ENCODE measurements at regions of chr11 and their contacts with region 1.

Region 1: DNA sequence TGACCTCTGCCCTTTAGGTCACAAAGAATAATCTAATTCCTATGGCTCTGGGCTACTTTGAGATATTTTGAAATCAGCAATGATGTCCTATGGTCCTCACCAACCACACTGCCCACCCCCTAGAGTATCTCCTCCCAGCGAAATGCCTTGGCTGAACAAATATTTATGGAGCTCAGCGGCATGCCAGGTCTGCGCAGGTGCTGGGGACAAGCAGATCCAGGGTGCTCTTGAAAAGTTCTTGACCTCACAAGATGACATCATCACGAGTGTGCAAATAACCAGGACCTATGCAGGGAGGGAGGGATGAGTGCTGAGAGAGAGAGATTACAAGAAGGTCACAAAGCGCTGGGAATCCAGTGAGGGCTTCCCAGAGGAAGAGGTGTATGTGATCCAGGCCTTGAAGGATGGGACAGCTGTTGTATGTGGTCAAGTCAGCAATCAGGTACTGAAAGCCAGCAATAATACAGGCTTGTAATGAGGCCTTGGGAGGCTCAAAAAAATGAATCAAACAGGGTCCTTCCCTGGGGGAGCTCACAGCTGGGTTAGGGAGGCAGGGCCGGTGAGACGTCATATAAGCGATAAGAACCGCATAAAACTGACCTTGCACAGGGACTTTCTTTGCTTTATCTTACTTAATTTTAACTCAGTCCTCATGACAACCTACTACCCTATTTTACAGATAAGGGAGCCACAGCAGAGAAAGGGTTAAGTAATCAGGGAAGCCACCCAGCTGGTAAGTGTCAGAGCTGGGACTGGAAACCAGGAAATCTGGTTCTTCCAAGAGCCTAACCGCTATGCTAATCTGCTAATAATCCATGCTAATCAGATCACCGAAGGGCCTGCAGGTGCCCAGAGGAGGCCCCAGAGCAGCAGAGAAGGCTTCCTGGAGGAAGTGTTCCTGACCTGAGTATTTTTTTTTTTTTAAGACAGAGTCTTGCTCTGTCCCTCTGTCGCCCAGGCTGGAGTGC is 8.3 kb downstream of the ARRB1 start:
- DNase-seq: no peak
- H3K4me3 ChIP-seq: no peak overlapping the region
- H3K27me3 ChIP-seq: no peaks in the 10 kb centered on the region
- CTCF ChIP-seq: no peak

Region 2: GRCh38 chr11:75248690-75249268 is 94.4 kb before region 1 on chr11:
- CTCF ChIA-PET with region 1: no interaction called
- POLR2A ChIA-PET with region 1: no interaction called
- DNase-seq: peak; percentile 37
- H3K4me3 ChIP-seq: no peak overlapping the region
- H3K27me3 ChIP-seq: peaks cover 17% of the 10 kb centered on the region
- CTCF ChIP-seq: peak; percentile 100

Region 3: DNA sequence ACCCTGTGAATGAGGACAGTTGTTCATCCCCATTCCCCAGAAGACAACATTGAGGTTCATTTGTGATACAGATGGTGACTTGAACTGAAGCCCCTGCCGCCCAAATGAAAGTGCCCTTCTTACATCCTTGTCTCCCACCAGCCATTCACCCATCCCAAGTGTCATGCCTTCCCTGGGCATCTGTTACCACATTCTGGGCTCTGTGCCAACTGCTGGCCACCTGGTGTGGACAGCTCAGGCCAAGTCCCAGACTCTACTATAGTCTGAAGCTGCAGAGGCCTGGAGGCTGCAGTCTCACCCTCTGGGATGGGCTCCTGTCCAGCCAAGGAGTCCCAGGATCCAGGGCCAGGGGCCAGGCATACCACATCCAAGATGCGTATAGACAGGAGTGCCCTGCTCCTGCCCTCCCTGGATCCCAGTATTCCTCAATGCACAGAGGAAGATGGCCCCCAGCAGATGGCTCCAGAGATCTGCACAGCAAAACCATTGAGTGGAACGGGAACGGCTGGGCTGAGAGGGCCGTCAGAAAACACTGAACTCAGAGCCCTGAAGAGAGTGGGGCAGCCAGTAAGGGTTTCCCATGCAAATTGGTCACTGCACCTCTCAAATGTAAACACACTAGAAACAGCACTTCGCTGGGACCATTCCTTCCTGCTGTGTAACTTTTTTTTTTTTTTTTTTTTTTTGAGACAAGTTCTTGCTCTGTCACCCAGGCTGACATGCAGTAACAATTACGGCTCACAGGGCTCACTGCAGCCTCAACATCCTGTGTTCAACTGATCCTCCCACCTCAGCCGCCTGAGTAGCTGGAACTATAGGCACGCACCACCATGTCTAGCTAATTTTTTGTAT is 14.5 kb before region 1 on chr11:
- CTCF ChIA-PET with region 1: interaction called, 20 read pairs
- POLR2A ChIA-PET with region 1: interaction called, 3 read pairs
- DNase-seq: no peak
- H3K4me3 ChIP-seq: no peak overlapping the region
- H3K27me3 ChIP-seq: no peaks in the 10 kb centered on the region
- CTCF ChIP-seq: peak; percentile 88

Region 4: DNA sequence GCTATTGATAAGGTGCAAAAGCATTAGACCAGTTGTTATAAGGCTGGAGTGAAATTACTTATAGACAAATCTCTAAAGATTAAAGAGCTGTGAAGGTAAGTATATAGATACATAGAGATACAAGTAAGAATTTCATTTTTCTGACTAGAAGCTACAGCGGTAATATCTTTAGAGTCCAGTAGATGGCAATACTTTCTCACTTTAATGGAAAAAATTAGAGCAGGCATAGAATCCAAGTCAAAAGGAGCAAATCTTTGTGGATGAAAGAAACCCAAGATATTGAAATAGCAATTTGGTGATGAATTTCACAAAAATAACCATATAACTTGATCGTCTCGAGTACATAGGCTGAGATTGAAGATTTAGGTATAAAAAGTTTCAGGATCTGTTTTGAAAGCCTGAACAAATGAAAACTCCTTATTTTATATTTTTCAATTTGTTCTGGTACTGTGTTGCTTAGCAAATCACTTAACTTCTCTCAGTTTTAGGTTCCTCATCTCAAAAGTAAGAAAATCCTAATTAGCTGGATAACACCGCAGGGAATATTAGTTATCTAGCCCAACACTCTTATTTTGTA is 553.7 kb after region 1 on chr11:
- CTCF ChIA-PET with region 1: no interaction called
- POLR2A ChIA-PET with region 1: no interaction called
- DNase-seq: no peak
- H3K4me3 ChIP-seq: no peak overlapping the region
- H3K27me3 ChIP-seq: no peaks in the 10 kb centered on the region
- CTCF ChIP-seq: peak; percentile 53

Measured in BJ (cell line).